HEK293 (cell line): ENCODE measurements at regions of chr19 and their contacts with region 1.

Region 1: GRCh38 chr19:6125571-6125989 is 9.9 kb upstream of the ACSBG2 start:
- H3K4me3 ChIP-seq: no peak overlapping the region
- H3K27ac ChIP-seq: no peak overlapping the region
- H3K4me1 ChIP-seq: no peaks in the 10 kb centered on the region
- CTCF ChIP-seq: peak; percentile 58

Region 2: DNA sequence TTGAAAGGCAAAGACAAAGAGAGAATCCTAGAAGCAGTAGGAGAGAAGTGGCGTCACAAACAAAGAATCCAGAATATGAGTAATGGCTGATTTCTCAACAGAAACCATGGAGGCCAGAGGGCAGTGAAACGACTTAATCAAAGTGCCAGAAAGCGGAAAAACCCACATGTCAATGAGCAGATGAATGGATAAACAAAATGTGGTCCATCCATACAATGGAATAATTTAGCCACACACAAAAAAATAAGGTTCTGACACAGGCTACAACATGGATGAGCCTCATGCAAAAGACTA is 95.4 kb before region 1 on chr19:
- CTCF ChIA-PET with region 1: interaction called, 12 read pairs
- POLR2A ChIA-PET with region 1: no interaction called
- H3K4me3 ChIP-seq: no peak overlapping the region
- H3K27ac ChIP-seq: no peak overlapping the region
- H3K4me1 ChIP-seq: no peaks in the 10 kb centered on the region
- CTCF ChIP-seq: no peak

Region 3: GRCh38 chr19:6055013-6055795 is 70.4 kb before region 1 on chr19:
- CTCF ChIA-PET with region 1: interaction called, 37 read pairs
- POLR2A ChIA-PET with region 1: no interaction called
- H3K4me3 ChIP-seq: no peak overlapping the region
- H3K27ac ChIP-seq: no peak overlapping the region
- H3K4me1 ChIP-seq: no peaks in the 10 kb centered on the region
- CTCF ChIP-seq: no peak

Region 4: GRCh38 chr19:6065685-6066374 is 59.8 kb before region 1 on chr19:
- CTCF ChIA-PET with region 1: interaction called, 15 read pairs
- POLR2A ChIA-PET with region 1: no interaction called
- H3K4me3 ChIP-seq: no peak overlapping the region
- H3K27ac ChIP-seq: no peak overlapping the region
- H3K4me1 ChIP-seq: peaks cover 5% of the 10 kb centered on the region; the same call in 1 of the 2 replicates
- CTCF ChIP-seq: no peak